WTC11 (cell line): ENCODE measurements at regions of chr14 and their contacts with region 1.

Region 1: GRCh38 chr14:100662879-100663760 is 63.6 kb upstream of the DLK1 start:
- DNase-seq: peak; percentile 76
- ATAC-seq: peak; percentile 22
- H3K4me3 Mint-ChIP-seq: no peak overlapping the region
- H3K27ac Mint-ChIP-seq: no peak overlapping the region
- H3K4me1 Mint-ChIP-seq: peaks cover 11% of the 10 kb centered on the region
- H3K27me3 Mint-ChIP-seq: no peaks in the 10 kb centered on the region
- CTCF ChIP-seq: peak; percentile 98

Region 2: DNA sequence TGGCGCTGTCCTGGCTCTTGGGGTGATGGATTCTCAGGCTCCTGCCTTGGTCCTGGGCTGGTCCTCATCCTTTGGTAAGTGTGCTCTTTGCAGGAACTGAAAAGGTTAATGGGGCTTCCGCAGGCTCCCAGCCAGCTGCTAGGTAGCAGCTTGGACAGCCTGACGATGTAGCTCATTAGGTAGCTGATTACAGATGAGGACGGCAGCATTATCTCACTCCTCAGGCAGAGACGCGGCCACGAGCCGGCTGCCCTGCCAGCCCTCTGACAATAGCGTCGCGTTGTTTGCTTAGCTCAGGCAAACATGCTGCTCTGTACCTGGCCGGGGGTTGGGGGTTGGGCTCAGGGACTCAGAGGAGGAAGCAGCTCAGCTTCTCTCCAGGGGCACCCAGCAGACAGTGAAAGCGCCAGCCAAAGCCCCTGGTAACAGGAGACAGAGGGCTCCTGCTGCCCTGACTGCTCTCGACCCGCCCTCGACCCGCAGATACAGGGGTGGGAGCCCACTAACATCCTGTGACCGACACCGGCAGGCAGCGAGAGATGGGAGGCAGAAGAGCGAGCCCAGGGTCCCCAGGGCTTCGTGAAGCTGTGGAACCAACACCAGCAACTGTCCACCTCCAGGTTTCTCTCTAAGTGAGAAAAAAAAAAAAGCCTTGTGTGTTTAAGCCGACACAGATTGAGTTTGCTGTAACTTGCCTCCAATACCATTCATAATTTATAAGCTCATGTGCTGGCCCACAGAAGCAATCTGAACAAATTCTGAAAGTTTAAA is 10.1 kb after region 1 on chr14:
- CTCF ChIA-PET with region 1: interaction called, 32 read pairs
- POLR2A ChIA-PET with region 1: interaction called, 5 read pairs
- DNase-seq: peak; percentile 62
- ATAC-seq: peak; percentile 87
- H3K4me3 Mint-ChIP-seq: peak overlapping the region; percentile 38
- H3K27ac Mint-ChIP-seq: no peak overlapping the region
- H3K4me1 Mint-ChIP-seq: peaks cover 26% of the 10 kb centered on the region
- H3K27me3 Mint-ChIP-seq: peaks cover 24% of the 10 kb centered on the region
- CTCF ChIP-seq: no peak